Right ventricle myocardium superior (tissue), 1 donor: ENCODE measurements at regions of chr7 and their contacts with region 1.

Region 1: DNA sequence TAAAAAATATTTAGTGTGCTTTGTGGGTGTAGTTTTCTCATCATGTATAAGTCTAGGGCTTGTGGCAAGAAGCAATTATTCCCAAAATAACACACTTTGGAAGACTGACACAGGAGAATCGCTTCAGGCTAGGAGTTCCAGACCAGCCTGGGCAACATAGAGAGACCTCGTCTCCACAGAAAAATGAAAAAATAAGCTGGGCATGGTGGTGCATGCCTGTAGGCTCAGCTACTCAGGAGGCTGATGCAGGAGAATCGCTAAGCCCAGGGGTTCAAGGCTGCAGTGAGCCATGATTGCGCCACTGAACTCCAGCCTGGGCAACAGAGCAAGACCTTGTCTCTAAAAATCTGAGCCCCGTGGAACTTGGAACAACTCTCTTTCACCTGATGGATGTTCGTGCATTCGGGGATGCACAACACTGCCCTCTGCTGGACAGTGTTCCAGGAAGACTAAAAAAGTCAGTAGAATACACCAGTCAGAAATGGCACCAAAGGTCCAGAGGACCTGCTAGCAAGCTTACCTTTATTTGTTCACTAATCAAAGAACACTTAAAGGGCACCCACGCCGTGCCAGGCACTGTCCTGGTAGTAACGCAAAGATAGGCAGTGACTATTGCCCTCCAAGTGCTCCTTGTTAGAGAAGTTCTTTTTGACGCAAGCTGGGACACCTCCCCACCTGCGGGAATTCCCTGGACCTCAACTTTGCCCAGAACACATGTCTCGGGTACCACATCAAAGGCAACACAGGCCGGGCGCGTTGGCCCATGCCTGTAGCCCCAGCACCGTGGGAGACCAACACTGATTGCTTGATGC is 81.9 kb upstream of the CALN1 start:
- DNase-seq: peak; percentile 47
- ATAC-seq: peak; percentile 51

Region 2: DNA sequence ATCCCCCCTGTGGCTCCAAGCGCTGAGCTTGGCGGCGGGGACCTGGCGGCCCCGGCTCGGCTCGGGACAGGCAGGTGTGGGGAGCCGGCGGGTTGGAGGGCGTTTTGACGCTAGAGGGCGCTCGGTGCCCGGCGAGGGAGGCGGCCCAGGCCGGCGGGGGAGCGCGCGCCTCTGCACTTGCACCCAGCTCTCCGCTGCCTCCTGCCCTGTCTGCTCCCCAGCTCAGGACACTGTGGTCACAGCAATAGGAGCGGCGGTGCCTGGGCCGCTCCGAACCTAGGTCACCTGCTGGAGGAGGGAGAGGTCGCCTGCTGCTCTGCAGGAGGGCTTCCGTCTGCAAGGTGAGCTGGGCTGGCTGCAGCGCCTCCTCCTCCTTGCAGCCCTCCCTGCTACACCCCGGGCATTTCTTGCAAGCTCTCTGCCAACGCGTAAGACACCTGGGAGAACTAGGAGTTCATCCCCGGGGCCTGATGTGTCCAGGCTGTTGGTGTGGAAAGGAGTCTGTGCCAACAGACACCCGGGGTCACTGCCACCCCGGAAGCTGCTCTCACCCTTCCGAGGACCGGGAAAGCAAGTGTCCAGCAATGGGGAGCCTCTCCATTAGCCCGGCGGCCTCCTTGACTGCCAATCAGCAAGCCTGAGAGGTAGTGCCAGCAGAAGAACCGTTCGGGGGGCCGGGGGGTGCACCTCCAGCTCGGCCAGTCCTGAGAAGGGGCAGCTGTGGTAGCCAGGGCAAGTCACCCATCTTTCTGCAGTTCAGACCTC is 741.7 kb before region 1 on chr7:
- intact Hi-C with region 1: loop called (anchors 5 kb)
- DNase-seq: peak; percentile 63
- ATAC-seq: peak; percentile 88

Region 3: DNA sequence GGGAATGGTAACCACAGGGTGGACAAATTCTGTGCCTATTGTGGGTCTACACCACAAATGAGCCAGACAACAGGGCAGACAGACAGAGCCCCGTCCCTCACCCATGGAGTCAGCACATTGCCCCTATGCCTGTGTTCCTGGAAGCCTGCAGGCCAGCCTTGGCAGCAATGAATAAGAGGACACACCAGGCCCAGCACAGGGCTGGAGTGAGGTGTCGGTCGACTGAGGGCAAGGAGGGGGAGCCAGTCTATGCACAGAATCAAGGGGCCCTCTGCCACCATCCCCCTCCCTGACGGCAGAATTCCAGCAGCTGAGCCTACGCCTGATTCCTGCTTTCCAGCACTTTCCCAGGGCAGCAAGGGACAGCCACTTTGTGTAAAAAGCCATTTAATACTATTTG is 180.2 kb before region 1 on chr7:
- intact Hi-C with region 1: no loop called
- DNase-seq: no peak
- ATAC-seq: no peak

Region 4: DNA sequence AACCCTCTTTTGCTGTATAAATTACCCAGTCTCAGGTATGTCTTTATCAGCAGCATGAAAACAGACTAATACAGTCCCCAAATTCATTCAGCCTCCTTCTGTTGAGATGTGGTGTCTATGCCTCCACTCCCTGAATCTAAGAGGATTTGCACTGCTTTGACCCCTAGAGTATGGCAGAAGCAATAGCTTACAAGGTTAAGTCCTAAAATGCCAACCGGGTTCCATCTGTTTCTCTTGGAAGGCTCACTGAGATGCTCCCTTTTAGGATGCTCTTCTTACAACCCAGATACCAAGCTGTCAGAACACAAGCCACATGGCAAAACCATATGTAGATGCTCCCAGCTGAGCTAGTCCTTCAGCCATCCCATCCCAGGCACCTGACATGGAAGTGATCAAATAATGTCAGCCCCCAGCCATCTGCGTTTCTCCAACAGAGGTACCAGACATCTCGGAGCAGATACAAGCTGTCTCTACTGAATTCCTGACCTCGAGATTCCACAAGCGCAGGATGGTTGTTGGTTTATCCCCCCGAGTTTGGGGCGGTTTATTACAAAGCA is 102.2 kb before region 1 on chr7:
- intact Hi-C with region 1: no loop called
- DNase-seq: no peak
- ATAC-seq: no peak